Activated naive CD4-positive, alpha-beta T cell treated with anti-CD3 and anti-CD28 coated beads for 36 hours (primary cell): ENCODE measurements at regions of chr6 and their contacts with region 1.

Region 1: DNA sequence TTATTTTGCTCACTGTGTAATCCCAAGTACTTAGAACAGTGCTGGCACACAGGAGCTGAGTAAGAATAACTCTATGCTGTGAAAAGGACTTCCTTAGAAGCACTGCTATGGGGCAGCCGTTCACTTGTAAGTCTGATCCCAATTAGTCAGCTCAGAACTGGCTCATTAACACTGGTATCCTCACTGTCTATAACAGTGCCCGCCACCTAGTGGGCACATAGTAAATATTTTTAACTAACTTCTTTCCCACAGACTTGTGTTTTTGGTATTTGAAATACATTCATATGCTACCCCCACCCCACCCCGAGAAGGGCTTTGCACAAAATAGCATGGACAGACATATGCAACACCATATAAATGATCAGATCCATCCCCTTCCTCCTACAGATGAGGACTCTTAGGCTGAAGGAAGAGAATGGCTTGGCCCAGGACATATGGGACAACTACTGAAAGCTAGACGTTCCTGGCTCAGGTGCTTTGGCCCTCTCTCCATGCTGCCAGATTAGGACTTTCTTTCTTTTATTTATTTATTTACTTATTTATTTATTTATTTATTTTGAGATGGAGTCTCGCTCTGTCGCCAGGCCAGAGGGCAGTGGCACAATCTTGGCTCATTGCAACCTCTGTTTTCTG is 47.1 kb downstream of the DST start:
- DNase-seq: peak; percentile 74
- H3K4me3 Mint-ChIP-seq: no peak overlapping the region
- H3K27ac Mint-ChIP-seq: peak overlapping the region; percentile 38
- H3K4me1 Mint-ChIP-seq: peaks cover 33% of the 10 kb centered on the region
- H3K27me3 Mint-ChIP-seq: peaks cover 8% of the 10 kb centered on the region

Region 2: GRCh38 chr6:55980627-55981211 is 614.9 kb before region 1 on chr6:
- CTCF ChIA-PET with region 1: interaction called, 3 read pairs
- intact Hi-C with region 1: loop called (anchors 2 kb)
- DNase-seq: no peak
- H3K4me3 Mint-ChIP-seq: no peak overlapping the region
- H3K27ac Mint-ChIP-seq: no peak overlapping the region
- H3K4me1 Mint-ChIP-seq: no peaks in the 10 kb centered on the region
- H3K27me3 Mint-ChIP-seq: no peaks in the 10 kb centered on the region

Region 3: GRCh38 chr6:56359201-56359899 is 236.3 kb before region 1 on chr6:
- CTCF ChIA-PET with region 1: interaction called, 35 read pairs
- intact Hi-C with region 1: loop called (anchors 1 kb)
- DNase-seq: peak; percentile 82
- H3K4me3 Mint-ChIP-seq: no peak overlapping the region
- H3K27ac Mint-ChIP-seq: no peak overlapping the region
- H3K4me1 Mint-ChIP-seq: no peaks in the 10 kb centered on the region
- H3K27me3 Mint-ChIP-seq: no peaks in the 10 kb centered on the region

Region 4: DNA sequence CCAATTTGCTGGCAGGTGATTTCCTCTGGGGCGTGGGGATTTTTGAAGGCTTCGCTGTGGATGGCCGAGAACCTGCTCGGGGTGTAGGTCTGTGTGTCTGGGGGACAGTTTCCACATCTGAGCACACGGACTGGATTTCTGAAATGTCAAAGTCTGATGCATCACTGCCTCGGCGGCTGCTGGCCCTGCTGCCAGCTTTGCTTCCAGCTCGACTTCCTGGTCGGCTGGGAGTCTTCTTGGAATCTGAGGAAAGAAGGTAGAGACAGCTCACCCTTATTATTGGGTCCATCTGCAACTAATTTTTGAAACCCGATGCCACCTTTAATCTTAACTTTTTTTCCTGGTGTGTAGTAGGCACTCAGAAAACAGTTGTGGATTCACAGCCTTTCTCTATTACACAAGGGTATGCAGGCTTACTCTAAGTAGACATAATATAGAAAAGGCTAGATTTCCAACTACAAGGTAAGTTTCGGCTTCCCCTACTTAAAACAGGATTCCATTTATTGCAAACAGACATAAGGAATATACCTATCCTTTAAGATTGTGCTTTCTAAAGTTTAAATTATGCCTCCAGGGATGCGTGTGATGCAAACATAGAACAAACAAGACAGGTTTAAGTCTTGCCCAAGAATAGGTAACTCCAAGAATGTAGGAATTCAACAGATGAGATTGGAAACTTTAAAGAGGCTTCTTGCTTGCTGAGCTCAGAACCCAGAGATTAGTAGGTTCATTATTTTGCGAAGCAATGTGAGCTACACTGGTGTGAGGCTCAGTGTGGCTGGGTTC is 136.4 kb before region 1 on chr6:
- CTCF ChIA-PET with region 1: no interaction called
- intact Hi-C with region 1: loop called (anchors 1 kb)
- DNase-seq: no peak
- H3K4me3 Mint-ChIP-seq: no peak overlapping the region
- H3K27ac Mint-ChIP-seq: no peak overlapping the region
- H3K4me1 Mint-ChIP-seq: peaks cover 21% of the 10 kb centered on the region
- H3K27me3 Mint-ChIP-seq: no peaks in the 10 kb centered on the region

Region 5: GRCh38 chr6:56532766-56533551 is 62.6 kb before region 1 on chr6:
- CTCF ChIA-PET with region 1: no interaction called
- intact Hi-C with region 1: no loop called
- DNase-seq: no peak
- H3K4me3 Mint-ChIP-seq: no peak overlapping the region
- H3K27ac Mint-ChIP-seq: no peak overlapping the region
- H3K4me1 Mint-ChIP-seq: no peaks in the 10 kb centered on the region
- H3K27me3 Mint-ChIP-seq: no peaks in the 10 kb centered on the region

Region 6: GRCh38 chr6:56575736-56576135 is 19.9 kb before region 1 on chr6:
- CTCF ChIA-PET with region 1: interaction called, 30 read pairs
- intact Hi-C with region 1: loop called (anchors 1 kb)
- DNase-seq: no peak
- H3K4me3 Mint-ChIP-seq: no peak overlapping the region
- H3K27ac Mint-ChIP-seq: no peak overlapping the region
- H3K4me1 Mint-ChIP-seq: no peaks in the 10 kb centered on the region
- H3K27me3 Mint-ChIP-seq: no peaks in the 10 kb centered on the region

Region 7: DNA sequence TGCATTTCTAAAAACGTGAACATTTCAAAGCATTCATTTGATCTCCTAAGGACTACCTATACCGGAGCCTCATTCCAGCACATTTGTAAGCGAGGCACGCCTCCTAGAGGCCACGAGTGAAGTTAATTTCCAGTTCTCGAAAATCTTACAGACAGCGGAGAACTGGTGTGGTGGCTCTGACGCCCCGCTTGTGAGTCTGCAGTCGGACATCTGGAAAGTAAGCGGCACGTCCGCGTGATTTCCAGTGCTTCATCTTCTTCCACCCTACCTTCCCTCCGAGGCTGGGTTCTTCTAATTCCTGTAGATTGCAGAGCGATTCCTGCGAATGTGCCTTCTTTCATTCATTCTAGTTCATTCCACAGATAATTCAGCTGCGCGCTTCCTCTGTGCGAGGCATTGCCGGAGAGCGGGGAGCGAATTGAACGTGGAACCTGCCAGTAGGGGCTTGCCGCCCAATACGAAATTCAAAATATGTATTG is 721.0 kb after region 1 on chr6:
- CTCF ChIA-PET with region 1: no interaction called
- intact Hi-C with region 1: loop called (anchors 1 kb)
- DNase-seq: peak; percentile 91
- H3K4me3 Mint-ChIP-seq: peak overlapping the region; percentile 99
- H3K27ac Mint-ChIP-seq: peak overlapping the region; percentile 99
- H3K4me1 Mint-ChIP-seq: peaks cover 30% of the 10 kb centered on the region
- H3K27me3 Mint-ChIP-seq: no peaks in the 10 kb centered on the region